ENCODE measurements at regions of chr13 and their contacts with region 1.

Region 1: DNA sequence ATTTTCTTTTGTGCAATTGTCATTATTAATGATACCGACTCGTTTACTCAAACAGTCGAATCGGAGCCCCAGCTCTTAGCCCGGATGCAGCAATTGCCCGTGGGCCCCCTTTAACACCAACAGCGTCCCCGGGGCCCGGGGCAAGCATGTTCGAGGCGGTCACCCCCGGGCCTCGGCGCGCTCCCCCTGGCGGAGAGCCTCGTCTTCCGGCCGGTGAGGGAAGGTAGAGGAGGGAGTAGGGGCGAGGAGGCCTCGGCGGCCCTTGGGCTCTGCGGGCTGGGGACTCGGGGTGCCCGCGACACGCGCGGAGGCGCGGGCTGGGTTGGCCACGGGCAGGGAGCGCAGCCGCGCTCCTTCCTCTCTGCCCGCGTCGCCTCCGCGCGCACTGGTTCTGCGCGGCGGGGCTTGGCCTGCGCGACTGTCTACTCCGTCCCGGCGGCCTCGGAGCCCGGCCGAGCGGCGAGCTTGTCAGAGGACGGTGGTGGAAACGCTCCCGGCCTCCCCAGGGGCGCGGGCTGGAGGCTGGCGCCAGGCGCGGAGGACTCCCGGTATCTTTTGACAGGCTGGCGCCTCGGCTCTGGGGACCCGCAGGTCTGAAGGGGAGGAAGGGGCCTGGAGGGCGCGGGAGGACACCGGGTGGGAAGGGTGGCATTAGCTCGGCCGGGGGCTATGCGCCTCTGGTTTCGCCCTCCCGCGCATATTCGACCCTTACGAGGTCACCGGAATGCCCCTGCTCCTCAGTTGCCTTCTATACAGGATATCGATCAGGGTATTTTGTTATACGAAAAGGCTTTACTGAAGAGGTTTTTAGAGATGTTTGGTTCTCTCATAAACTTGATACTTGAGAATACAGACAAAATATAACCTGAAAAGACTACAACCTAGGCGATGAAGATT is 1.5 kb downstream of the BIVM start:
- DNase-seq: peak; percentile 56

Region 2: GRCh38 chr13:102642475-102642874 is 157.9 kb before region 1 on chr13:
- CTCF ChIA-PET with region 1: no interaction called
- POLR2A ChIA-PET with region 1: no interaction called
- DNase-seq: no peak

Region 3: DNA sequence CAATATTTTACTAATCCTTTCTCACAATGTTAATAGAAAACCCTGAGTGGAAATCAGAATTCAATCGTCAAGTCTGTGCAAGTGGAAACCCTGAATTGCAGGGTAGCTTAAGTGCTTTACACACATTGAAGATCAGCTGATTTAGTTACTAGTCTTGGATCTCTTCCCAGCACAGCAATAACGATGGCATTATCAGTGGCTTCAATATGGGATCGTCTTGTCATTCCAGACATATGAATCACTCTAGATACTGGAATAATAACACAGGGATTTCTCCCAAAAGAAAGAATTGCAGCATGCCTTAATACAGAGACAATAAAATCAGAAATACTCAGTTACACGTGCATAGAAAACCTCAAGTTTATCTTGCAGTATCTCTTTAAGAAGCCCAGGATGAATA is 92.9 kb before region 1 on chr13:
- CTCF ChIA-PET with region 1: no interaction called
- POLR2A ChIA-PET with region 1: no interaction called
- DNase-seq: no peak

Region 4: DNA sequence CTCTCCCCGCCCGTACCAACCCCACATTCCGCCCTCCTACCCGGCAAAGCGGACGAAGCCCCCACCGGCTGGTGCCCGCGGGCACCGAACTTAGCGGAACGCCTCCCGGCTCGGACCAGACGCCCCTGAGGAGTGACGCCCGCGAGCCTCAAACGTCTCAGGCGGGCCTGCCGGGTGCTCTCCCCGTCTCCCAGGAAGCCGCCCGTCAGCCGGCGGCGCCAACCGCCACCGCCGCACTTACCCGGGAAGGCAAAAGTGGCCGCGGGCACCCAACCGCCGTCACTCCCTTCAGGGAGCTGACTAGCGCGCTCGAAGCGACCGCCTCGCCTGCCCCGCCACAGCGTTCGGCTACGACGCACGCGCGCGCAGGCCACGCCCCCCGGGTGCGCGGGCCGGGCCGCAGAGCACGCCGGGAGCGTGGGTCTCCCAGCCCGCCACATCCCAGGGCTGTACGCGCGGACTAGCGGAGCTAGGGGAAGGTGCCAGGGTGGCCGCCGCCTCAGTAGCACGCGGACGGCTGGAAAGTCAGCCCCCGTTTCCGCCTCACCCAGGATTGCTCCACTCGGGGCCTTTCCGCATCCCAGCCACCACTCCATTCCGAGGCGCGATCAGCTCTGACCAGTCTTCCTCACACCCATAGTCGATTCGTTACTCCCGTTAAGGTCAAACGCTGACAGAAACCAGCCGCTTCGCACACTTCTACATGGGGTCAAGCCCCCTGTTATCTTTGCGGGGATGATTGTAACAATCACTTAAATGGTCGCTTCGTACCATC is 26.8 kb before region 1 on chr13 and contains the start of gene TEX30:
- CTCF ChIA-PET with region 1: no interaction called
- POLR2A ChIA-PET with region 1: interaction called, 10 read pairs
- DNase-seq: peak; percentile 76

Region 5: GRCh38 chr13:102845630-102846260 is 45.4 kb after region 1 on chr13 and contains the start of gene ERCC5:
- CTCF ChIA-PET with region 1: no interaction called
- POLR2A ChIA-PET with region 1: interaction called, 11 read pairs
- DNase-seq: peak; percentile 69

Measured in HEK293T (cell line).